ENCODE measurements at regions of chr1 and their contacts with region 1.

Region 1: GRCh38 chr1:184805667-184806295 is 51.1 kb upstream of the EDEM3 start:
- DNase-seq: peak; percentile 94
- H3K4me3 Mint-ChIP-seq: no peak overlapping the region
- H3K27ac Mint-ChIP-seq: no peak overlapping the region
- H3K4me1 Mint-ChIP-seq: peaks cover 3% of the 10 kb centered on the region
- H3K27me3 Mint-ChIP-seq: no peaks in the 10 kb centered on the region

Region 2: DNA sequence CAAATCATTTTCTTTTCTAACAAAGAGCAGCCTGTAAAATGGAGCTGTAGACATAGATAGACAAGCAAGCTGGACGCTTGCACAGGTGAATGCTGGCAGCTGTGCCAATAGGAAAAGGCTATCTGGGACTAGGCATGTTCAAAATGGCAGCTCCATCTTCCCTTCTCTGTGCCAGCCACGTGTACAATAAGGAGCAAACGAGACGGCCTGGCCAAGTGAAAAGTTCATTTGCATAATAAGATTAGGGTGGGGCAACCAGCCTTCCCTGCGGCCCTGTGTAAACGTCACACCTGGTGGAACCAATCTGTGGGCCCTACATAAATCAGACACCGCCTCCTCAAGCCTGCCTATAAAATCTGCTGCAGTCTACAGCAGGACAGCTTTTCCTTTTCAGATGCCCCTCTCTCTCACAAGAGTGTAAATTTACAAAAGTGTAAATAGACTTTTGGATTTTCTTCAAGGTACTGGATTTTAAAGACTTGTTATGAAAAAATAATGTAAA is 34.5 kb before region 1 on chr1:
- intact Hi-C with region 1: no loop called
- DNase-seq: no peak
- H3K4me3 Mint-ChIP-seq: no peak overlapping the region
- H3K27ac Mint-ChIP-seq: no peak overlapping the region
- H3K4me1 Mint-ChIP-seq: no peaks in the 10 kb centered on the region
- H3K27me3 Mint-ChIP-seq: peaks cover 16% of the 10 kb centered on the region

Region 3: DNA sequence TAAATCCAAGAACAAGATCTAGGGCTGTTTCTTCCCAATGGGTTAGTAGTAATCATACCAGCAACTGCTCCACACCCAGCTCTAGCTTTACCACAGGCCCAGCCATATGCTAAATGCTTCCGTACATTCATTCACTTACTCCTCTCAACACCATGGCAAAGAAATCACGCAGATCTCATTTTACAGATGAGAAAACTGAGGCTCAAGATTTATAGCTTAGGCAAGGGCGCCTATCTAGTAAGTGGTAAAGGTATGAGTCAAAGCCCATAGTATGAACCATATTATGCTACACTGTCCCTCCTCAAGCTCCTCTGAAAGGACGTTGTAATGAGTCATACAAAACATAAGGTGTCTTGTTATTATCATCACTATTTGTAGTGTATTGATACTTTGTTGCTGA is 86.3 kb after region 1 on chr1:
- intact Hi-C with region 1: loop called (anchors 5 kb)
- DNase-seq: peak; percentile 58
- H3K4me3 Mint-ChIP-seq: no peak overlapping the region
- H3K27ac Mint-ChIP-seq: peak overlapping the region; percentile 61
- H3K4me1 Mint-ChIP-seq: peaks cover 29% of the 10 kb centered on the region
- H3K27me3 Mint-ChIP-seq: no peaks in the 10 kb centered on the region

Region 4: GRCh38 chr1:184982002-184982954 is 176.5 kb after region 1 on chr1:
- intact Hi-C with region 1: loop called (anchors 1 kb)
- DNase-seq: peak; percentile 92
- H3K4me3 Mint-ChIP-seq: no peak overlapping the region
- H3K27ac Mint-ChIP-seq: no peak overlapping the region
- H3K4me1 Mint-ChIP-seq: peaks cover 7% of the 10 kb centered on the region
- H3K27me3 Mint-ChIP-seq: peaks cover 44% of the 10 kb centered on the region

Region 5: GRCh38 chr1:185044981-185045813 is 239.4 kb after region 1 on chr1 and contains the start of gene RNF2:
- intact Hi-C with region 1: loop called (anchors 5 kb)
- DNase-seq: peak; percentile 91
- H3K4me3 Mint-ChIP-seq: peak within 1 kb of the TSS; percentile 93
- H3K27ac Mint-ChIP-seq: peak within 1 kb of the TSS; percentile 91
- H3K4me1 Mint-ChIP-seq: peaks cover 26% of the 10 kb centered on the region
- H3K27me3 Mint-ChIP-seq: peaks cover 18% of the 10 kb centered on the region
- total RNA-seq, gene RNF2: 17.8 and 21.1 TPM in 2 replicates

Region 6: GRCh38 chr1:185170291-185170848 is 364.6 kb after region 1 on chr1:
- intact Hi-C with region 1: loop called (anchors 1 kb)
- DNase-seq: peak; percentile 85
- H3K4me3 Mint-ChIP-seq: no peak overlapping the region
- H3K27ac Mint-ChIP-seq: no peak overlapping the region
- H3K4me1 Mint-ChIP-seq: peaks cover 9% of the 10 kb centered on the region
- H3K27me3 Mint-ChIP-seq: no peaks in the 10 kb centered on the region

Region 7: GRCh38 chr1:185681034-185681633 is 875.4 kb after region 1 on chr1:
- intact Hi-C with region 1: loop called (anchors 2 kb)
- DNase-seq: peak; percentile 80
- H3K4me3 Mint-ChIP-seq: no peak overlapping the region
- H3K27ac Mint-ChIP-seq: no peak overlapping the region
- H3K4me1 Mint-ChIP-seq: peaks cover 18% of the 10 kb centered on the region
- H3K27me3 Mint-ChIP-seq: peaks cover 3% of the 10 kb centered on the region

Measured in activated CD4-positive, alpha-beta T cell treated with anti-CD3 and anti-CD28 coated beads, Interleukin-2, amount 10 ng/mL, durations not matched to agents 24 days and 14 days (primary cell).